ENCODE measurements at regions of chr18 and their contacts with region 1.

Region 1: GRCh38 chr18:42114310-42114943 is 159.4 kb downstream of the PIK3C3 start:
- DNase-seq: peak; percentile 36 to 78
- H3K4me3 ChIP-seq: no peak overlapping the region
- H3K27ac ChIP-seq: no peak overlapping the region
- H3K4me1 ChIP-seq: no peaks in the 10 kb centered on the region
- H3K27me3 ChIP-seq: no peaks in the 10 kb centered on the region
- CTCF ChIP-seq: peak; percentile 30 to 85 (median 78)
- EP300 ChIP-seq: no peak
- POLR2A ChIP-seq: no peak
- RAD21 ChIP-seq: peak; percentile 98

Region 2: DNA sequence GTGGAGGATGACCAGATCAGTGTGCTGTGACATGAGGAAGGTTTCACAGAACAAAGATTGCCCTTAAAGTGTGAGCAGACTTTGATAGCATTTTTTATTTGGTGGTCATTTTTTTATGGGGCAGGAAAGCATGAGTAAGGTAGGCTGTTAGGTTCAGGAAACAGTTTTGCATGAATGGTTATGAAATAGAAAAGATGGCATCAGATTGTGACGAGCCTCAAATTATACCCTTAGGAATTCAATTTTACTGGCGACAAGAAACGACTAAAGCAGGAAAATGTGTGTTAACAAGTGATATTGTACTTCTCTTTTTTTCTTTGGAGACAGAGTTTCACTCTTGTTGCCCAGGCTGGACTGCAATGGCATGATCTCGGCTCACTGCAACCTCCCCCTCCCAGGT is 114.7 kb before region 1 on chr18:
- CTCF ChIA-PET with region 1: no interaction called
- POLR2A ChIA-PET with region 1: no interaction called
- DNase-seq: no peak
- H3K4me3 ChIP-seq: no peak overlapping the region
- H3K27ac ChIP-seq: no peak overlapping the region
- H3K4me1 ChIP-seq: peaks cover 0 to 3% (median 0%) of the 10 kb centered on the region in 4 experiments; a peak in 1 of 7 replicates
- H3K27me3 ChIP-seq: no peaks in the 10 kb centered on the region
- CTCF ChIP-seq: no peak
- EP300 ChIP-seq: no peak
- POLR2A ChIP-seq: no peak
- RAD21 ChIP-seq: no peak

Region 3: GRCh38 chr18:42274488-42275137 is 160.2 kb after region 1 on chr18:
- CTCF ChIA-PET with region 1: interaction called, 10 read pairs
- POLR2A ChIA-PET with region 1: no interaction called
- DNase-seq: no peak
- H3K4me3 ChIP-seq: no peak overlapping the region
- H3K27ac ChIP-seq: no peak overlapping the region
- H3K4me1 ChIP-seq: peaks cover 0 to 7% (median 1%) of the 10 kb centered on the region in 4 experiments; a peak in 3 of 7 replicates
- H3K27me3 ChIP-seq: no peaks in the 10 kb centered on the region
- CTCF ChIP-seq: peak in 2 of 3 experiments; percentile 36 to 39; a peak in 2 of 4 replicates
- EP300 ChIP-seq: no peak
- POLR2A ChIP-seq: no peak
- RAD21 ChIP-seq: peak; percentile 45 to 55

Region 4: DNA sequence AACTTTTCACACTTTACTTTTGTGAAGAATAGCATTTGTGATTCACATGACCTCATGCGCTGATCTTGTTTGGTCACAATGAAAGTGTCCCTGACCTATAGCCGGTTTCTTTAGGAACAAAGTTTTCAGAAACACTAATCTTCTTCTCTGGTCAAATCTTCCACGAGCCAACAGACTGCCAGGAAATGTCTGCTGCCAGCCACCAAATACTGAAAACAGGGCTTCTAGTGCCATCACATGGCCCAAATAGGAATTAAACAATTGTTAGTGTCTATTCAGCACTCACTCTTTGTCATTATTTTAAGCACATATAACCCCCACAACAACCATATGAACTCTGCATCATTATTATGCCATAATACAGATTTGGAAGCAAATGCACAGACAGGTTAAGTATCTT is 1449.4 kb after region 1 on chr18:
- CTCF ChIA-PET with region 1: interaction called, 12 read pairs
- POLR2A ChIA-PET with region 1: no interaction called
- DNase-seq: no peak
- H3K4me3 ChIP-seq: no peak overlapping the region
- H3K27ac ChIP-seq: no peak overlapping the region
- H3K4me1 ChIP-seq: no peaks in the 10 kb centered on the region
- H3K27me3 ChIP-seq: no peaks in the 10 kb centered on the region
- CTCF ChIP-seq: peak in 2 of 3 experiments; percentile 70; a peak in 3 of 4 replicates
- EP300 ChIP-seq: no peak
- POLR2A ChIP-seq: no peak
- RAD21 ChIP-seq: peak; percentile 90 to 96

Measured in H1 (cell line).